AG04449 (cell line): ENCODE measurements at regions of chr21 and their contacts with region 1.

Region 1: DNA sequence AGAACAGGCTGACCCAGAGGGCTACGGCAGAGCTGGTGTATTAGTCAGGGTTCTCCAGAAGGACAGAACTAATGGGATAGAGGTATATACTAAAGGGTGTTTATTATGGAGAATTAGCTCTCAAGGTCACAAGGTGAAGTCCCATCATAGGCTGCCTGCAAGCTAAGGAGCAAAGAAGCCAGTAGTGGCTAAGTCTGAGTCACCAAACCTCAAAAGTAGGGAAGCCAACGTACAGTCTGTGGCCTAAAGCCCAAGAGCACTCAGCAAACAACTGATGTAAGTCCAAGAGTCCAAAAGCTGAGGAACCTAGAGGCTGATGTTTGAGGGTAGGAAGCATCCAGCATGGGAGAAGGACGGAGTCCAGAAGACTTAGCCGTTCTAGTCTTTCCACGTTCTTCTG is 179.2 kb downstream of the BACH1 start:
- DNase-seq: no peak
- H3K4me3 ChIP-seq: no peak overlapping the region
- CTCF ChIP-seq: no peak

Region 2: GRCh38 chr21:29098156-29098555 is 379.8 kb before region 1 on chr21:
- CTCF ChIA-PET with region 1: no interaction called
- POLR2A ChIA-PET with region 1: no interaction called
- DNase-seq: no peak
- H3K4me3 ChIP-seq: no peak overlapping the region
- CTCF ChIP-seq: no peak

Region 3: DNA sequence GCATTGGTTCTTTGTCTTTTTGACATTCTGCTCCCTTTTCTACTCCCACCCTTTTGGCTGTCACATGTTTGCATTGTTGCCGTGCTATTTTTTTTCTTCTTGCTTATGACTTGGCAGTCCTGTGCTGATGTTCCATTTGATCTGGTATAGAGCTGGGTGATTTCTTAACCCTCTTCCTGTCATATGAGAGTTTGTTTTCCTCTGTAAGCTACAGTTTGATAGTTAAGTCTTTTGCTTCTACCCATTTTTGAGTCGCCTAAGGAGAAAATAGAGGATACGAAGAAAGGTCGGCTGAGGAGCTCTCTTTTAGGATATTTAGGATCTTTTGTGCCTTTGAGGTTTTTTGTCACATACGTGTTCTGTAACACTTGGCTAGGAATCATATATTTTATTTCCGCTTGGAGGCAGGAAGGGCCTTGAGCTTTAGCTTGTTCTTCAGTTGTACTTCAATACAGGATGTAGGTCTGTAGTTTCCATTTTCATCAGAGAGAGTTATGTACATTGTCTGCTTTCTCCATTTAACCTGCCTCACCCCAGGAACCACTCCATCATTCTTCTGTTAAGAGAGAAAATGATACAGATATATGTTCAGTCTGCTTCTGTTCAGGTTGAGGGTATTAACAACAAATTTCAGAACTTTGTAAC is 28.5 kb before region 1 on chr21:
- CTCF ChIA-PET with region 1: interaction called, 14 read pairs
- POLR2A ChIA-PET with region 1: no interaction called
- DNase-seq: no peak
- H3K4me3 ChIP-seq: no peak overlapping the region
- CTCF ChIP-seq: no peak

Region 4: DNA sequence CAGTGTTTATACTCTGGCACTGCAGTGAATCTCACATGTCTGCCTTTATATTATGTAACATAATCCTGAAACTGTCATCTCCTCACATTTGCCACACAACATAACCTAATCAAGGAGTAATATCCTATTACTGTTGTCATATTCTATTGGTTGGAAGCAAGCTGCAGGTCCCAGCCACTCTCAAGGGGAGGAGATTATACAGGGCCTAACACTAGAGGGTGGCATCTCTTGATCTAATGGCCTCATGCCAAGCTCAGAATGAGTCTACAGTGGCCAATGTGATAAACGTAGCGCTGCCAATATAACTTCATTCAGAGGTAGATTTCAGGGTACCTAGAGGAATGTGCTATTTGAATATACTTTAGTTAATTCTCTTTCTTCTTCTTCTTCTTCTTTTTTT is 12.4 kb before region 1 on chr21:
- CTCF ChIA-PET with region 1: interaction called, 17 read pairs
- POLR2A ChIA-PET with region 1: no interaction called
- DNase-seq: no peak
- H3K4me3 ChIP-seq: no peak overlapping the region
- CTCF ChIP-seq: no peak

Region 5: DNA sequence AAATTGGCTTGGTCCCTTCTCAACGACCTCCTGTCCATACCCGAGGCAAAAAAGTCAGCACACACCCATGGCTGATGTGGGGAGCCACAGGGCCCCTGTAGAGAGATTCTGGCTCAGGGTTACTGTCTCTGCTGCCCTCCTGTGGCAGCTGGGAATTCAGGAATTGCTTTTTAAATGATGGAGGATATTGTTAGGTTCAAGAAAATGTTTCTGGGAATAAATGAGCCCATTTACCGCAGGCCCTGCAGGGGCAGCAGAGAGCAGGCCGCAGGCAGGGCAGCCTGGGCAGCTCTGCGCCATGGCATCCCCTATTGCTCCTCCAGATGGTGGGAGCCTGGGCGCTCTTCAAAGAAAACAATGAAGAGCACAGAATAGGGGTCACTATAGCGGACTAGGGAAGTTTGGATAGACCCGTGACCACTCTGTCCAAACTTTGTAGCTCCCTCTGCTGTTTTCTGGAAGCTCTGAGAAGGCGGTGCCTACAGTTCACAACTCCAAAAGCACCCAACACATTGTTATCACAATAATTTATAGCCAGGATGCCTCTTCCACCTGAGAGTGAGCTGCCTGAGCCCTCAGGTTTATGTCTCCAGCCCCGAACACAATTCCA is 21.9 kb after region 1 on chr21:
- CTCF ChIA-PET with region 1: interaction called, 14 read pairs
- POLR2A ChIA-PET with region 1: no interaction called
- DNase-seq: no peak
- H3K4me3 ChIP-seq: no peak overlapping the region
- CTCF ChIP-seq: peak; percentile 20

Region 6: GRCh38 chr21:29849735-29850176 is 371.8 kb after region 1 on chr21:
- CTCF ChIA-PET with region 1: interaction called, 66 read pairs
- POLR2A ChIA-PET with region 1: no interaction called
- DNase-seq: peak; percentile 4
- H3K4me3 ChIP-seq: no peak overlapping the region
- CTCF ChIP-seq: peak; percentile 85

Region 7: DNA sequence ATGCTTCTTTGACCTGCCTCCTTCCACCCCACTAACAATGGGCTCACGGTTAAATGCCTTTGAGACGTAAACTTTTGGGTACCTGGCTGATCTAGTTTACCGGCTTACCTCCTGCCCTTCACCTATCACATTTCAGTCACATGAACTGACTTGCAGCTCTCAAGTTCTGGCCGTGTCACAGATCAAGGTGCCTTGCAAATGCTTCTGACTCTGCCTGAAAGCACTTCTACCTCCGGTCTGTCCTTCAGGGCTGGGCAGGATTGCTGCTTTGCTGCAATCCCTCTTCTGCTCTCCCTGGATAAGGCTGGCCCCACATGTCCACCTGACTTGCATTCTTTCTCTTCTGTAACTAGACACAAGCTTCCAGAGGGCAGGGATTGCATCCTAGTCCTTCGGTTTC is 392.9 kb after region 1 on chr21:
- CTCF ChIA-PET with region 1: no interaction called
- POLR2A ChIA-PET with region 1: no interaction called
- DNase-seq: no peak
- H3K4me3 ChIP-seq: no peak overlapping the region
- CTCF ChIP-seq: no peak